Activated CD4-positive, alpha-beta memory T cell treated with anti-CD3 and anti-CD28 coated beads for 36 hours (primary cell): ENCODE measurements at regions of chr12 and their contacts with region 1.

Region 1: GRCh38 chr12:109858764-109859163 is 21.6 kb downstream of the GLTP start:
- DNase-seq: no peak
- H3K4me3 Mint-ChIP-seq: no peak overlapping the region
- H3K27ac Mint-ChIP-seq: no peak overlapping the region
- H3K4me1 Mint-ChIP-seq: peaks cover under 1% of the 10 kb centered on the region
- H3K27me3 Mint-ChIP-seq: no peaks in the 10 kb centered on the region

Region 2: GRCh38 chr12:109870648-109871047 is 11.9 kb after region 1 on chr12:
- CTCF ChIA-PET with region 1: interaction called, 24 read pairs
- POLR2A ChIA-PET with region 1: no interaction called
- intact Hi-C with region 1: no loop called
- DNase-seq: no peak
- H3K4me3 Mint-ChIP-seq: no peak overlapping the region
- H3K27ac Mint-ChIP-seq: no peak overlapping the region
- H3K4me1 Mint-ChIP-seq: peaks cover 30% of the 10 kb centered on the region
- H3K27me3 Mint-ChIP-seq: no peaks in the 10 kb centered on the region

Region 3: DNA sequence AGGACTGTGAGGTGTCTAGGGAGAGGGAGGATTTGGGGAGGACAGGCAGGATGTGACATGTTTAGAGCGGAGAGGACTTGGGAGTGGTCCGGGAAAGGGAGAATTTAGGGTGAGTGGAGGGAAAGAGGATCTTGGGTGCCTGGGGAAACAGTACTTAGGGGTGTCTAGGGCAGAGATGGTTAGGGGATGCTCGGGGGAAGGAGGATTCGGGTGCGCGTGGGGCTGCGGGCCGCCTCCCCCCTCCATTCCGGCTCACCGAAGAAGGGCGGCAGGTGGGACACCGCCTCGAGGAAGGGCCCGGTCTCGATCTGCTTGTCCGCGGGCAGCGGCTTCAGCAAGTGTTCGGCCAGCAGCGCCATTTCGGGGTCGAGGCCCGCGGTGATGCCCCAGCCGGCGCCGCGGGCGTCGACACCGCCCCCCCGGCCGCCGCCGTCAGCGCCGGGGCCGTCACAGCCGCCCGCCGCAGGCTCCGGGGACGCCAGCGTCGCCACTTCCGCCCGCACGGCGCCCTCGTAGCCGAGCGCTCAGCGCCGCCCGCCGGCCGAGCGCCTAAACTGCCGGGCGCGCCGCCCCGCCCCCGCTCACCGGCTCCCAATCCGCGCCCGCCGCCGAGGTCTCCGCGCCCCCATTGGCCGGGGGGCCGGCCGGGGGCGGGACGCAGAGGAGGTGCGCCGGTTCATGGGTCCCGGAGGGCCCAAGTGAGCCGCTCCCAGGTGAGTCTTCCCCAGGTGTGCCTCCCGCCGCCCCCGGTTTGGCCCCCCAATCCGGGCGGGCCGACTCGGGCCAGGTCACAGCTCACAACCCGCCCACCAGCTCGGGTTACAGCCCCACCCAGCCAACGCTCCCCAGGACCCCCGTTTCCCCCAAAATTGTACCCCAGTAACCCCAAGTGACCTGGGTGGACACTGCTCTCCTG is 21.5 kb after region 1 on chr12 and contains the start of gene GLTP:
- CTCF ChIA-PET with region 1: interaction called, 8 read pairs
- POLR2A ChIA-PET with region 1: no interaction called
- intact Hi-C with region 1: loop called (anchors 1 kb)
- DNase-seq: peak; percentile 91
- H3K4me3 Mint-ChIP-seq: peak within 1 kb of the TSS; percentile 94
- H3K27ac Mint-ChIP-seq: peak within 1 kb of the TSS; percentile 79
- H3K4me1 Mint-ChIP-seq: peaks cover 45% of the 10 kb centered on the region
- H3K27me3 Mint-ChIP-seq: no peaks in the 10 kb centered on the region
- total RNA-seq, gene GLTP: 20.9 to 21.1 TPM

Region 4: GRCh38 chr12:109899783-109900751 is 41.3 kb after region 1 on chr12 and contains the start of gene TCHP:
- CTCF ChIA-PET with region 1: interaction called, 11 read pairs
- POLR2A ChIA-PET with region 1: no interaction called
- intact Hi-C with region 1: no loop called
- DNase-seq: peak; percentile 85
- H3K4me3 Mint-ChIP-seq: peak within 1 kb of the TSS; percentile 81
- H3K27ac Mint-ChIP-seq: peak within 1 kb of the TSS; percentile 86
- H3K4me1 Mint-ChIP-seq: peaks cover 22% of the 10 kb centered on the region
- H3K27me3 Mint-ChIP-seq: no peaks in the 10 kb centered on the region
- total RNA-seq, gene TCHP: 21.2 to 21.3 TPM

Region 5: DNA sequence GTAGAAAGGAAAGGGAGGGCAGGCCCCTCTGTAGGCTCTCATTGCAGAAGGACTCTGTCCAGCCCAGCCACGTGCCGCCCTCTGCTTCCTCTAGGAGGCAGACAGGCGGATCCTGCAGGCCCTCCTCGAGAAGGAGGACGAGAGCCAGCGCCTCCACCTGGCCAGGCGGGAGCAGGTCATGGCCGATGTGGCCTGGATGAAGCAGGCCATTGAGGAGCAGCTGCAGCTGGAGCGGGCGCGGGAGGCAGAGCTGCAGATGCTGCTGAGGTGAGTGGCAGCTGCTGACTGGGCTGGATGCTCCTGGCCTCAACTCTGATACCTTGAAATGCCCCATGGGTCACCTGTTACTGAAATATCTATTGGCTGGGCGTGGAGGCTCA is 52.2 kb after region 1 on chr12:
- CTCF ChIA-PET with region 1: interaction called, 13 read pairs
- POLR2A ChIA-PET with region 1: no interaction called
- intact Hi-C with region 1: no loop called
- DNase-seq: peak; percentile 44
- H3K4me3 Mint-ChIP-seq: no peak overlapping the region
- H3K27ac Mint-ChIP-seq: no peak overlapping the region
- H3K4me1 Mint-ChIP-seq: no peaks in the 10 kb centered on the region
- H3K27me3 Mint-ChIP-seq: no peaks in the 10 kb centered on the region

Region 6: GRCh38 chr12:109927622-109928021 is 68.9 kb after region 1 on chr12:
- CTCF ChIA-PET with region 1: interaction called, 41 read pairs
- POLR2A ChIA-PET with region 1: no interaction called
- intact Hi-C with region 1: loop called (anchors 1 kb)
- DNase-seq: peak; percentile 54
- H3K4me3 Mint-ChIP-seq: no peak overlapping the region
- H3K27ac Mint-ChIP-seq: no peak overlapping the region
- H3K4me1 Mint-ChIP-seq: no peaks in the 10 kb centered on the region
- H3K27me3 Mint-ChIP-seq: no peaks in the 10 kb centered on the region

Region 7: GRCh38 chr12:110176745-110177144 is 318.0 kb after region 1 on chr12:
- CTCF ChIA-PET with region 1: no interaction called
- POLR2A ChIA-PET with region 1: no interaction called
- intact Hi-C with region 1: no loop called
- DNase-seq: no peak
- H3K4me3 Mint-ChIP-seq: no peak overlapping the region
- H3K27ac Mint-ChIP-seq: no peak overlapping the region
- H3K4me1 Mint-ChIP-seq: no peaks in the 10 kb centered on the region
- H3K27me3 Mint-ChIP-seq: no peaks in the 10 kb centered on the region